Aorta (tissue), 5 donors: ENCODE measurements at regions of chr5 and their contacts with region 1.

Region 1: DNA sequence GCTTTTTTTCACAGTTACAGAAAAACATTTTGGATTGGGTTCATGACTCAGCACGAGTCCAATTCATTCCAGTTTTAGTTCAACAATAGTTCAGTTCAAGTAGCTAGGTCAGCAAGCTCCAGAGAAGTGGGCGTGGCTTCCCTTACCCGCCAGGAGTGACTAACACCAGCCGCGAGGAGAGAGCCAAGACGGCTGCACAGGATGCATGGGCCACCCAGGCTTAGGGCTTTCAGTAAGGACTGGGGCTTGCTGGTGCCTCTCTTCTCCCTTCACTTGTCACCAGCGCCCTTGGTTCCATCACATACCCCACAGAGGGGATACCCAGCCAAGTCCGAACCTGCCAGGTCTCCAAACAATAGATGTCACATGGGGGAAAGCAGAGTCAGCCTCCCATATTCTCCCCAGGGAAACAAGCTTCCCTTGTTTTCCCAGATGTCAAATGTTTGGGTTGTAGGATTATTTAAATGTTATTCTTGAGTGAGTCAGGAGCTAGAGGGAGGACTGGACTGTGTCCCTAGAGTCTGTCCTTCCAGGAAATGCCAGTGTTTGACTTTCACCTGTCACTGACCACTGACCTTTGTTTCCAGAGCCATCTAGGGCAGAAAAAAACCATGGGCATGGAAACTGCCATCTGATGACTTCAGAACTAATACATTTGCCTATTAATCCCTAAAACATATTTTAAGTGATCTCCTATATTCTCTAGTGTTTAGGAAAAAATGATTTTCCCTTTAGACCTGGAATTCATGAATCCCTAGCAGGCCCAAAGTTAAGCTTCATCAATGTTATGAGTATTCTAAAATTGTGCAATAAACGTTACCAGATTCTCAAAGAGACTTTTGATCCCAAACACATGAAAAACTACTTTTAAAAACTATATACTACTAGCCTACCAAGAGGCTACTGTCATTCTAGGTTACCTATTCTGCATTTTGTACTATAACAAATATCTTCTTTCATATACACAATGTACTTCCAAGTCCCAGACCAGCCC is 51.9 kb downstream of the NIPAL4 start:
- DNase-seq: peak; percentile 97 to 98
- ATAC-seq: peak; percentile 96
- H3K4me3 ChIP-seq: no peak overlapping the region
- H3K27ac ChIP-seq: peak overlapping the region; percentile 37 to 85
- H3K4me1 ChIP-seq: peaks cover 0 to 5% of the 10 kb centered on the region in 2 donors
- H3K27me3 ChIP-seq: no peaks in the 10 kb centered on the region

Region 2: GRCh38 chr5:157563373-157563928 is 51.5 kb after region 1 on chr5:
- intact Hi-C with region 1: loop called in 1 of 2 experiments (anchors 5 kb)
- DNase-seq: peak; percentile 68 to 85
- ATAC-seq: peak; percentile 65
- H3K4me3 ChIP-seq: no peak overlapping the region
- H3K27ac ChIP-seq: peak overlapping the region; percentile 73 to 96
- H3K4me1 ChIP-seq: peaks cover 7 to 9% of the 10 kb centered on the region in 2 donors
- H3K27me3 ChIP-seq: no peaks in the 10 kb centered on the region

Region 3: DNA sequence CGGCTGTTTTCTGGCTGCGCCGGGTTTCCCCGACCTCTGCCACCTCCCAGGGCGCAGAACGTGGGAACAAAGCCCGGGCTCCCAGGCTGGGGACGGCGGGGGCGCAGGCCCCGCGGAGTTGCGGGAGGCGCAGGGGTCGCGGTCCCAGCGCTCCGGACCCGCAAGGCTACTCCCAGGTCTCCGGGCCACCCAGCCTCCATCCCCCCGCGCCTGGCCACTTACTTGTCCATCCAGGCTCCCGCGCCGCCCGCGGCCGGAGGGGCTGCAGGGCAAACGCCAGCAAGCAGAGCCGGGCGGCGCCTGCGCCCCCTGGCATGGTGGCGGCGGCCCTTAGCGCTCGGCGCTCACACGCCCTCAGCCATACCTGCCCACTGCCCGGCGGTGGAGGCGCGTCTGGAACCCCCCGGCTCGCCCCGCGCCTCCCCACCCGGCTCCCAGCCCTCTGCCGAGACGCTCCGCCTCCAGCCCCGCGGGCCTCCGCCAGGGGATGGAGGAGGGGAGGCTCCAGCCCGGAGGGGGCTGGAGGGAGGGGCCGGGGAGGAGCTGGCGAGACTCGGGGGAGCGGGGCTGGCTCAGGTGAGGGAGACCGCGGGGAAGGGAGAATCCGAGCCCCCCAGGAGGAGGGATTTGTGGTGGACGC is 63.6 kb after region 1 on chr5 and contains the start of gene ADAM19:
- intact Hi-C with region 1: loop called (anchors 2 to 5 kb)
- DNase-seq: peak; percentile 74 to 88
- ATAC-seq: peak; percentile 91
- H3K4me3 ChIP-seq: peak within 1 kb of the TSS; percentile 69 to 76
- H3K27ac ChIP-seq: peak within 1 kb of the TSS in 1 of 2 donors; percentile 11
- H3K4me1 ChIP-seq: no peaks in the 10 kb centered on the region
- H3K27me3 ChIP-seq: no peaks in the 10 kb centered on the region
- total RNA-seq, gene ADAM19: 31.0 to 42.8 TPM

Region 4: GRCh38 chr5:157718519-157718918 is 206.6 kb after region 1 on chr5:
- intact Hi-C with region 1: loop called in 1 of 2 experiments (anchors 10 kb)
- DNase-seq: no peak
- ATAC-seq: peak; percentile 89
- H3K4me3 ChIP-seq: no peak overlapping the region
- H3K27ac ChIP-seq: no peak overlapping the region
- H3K4me1 ChIP-seq: no peaks in the 10 kb centered on the region
- H3K27me3 ChIP-seq: no peaks in the 10 kb centered on the region